Prostate gland (tissue), 2 donors: ENCODE measurements at regions of chr18 and their contacts with region 1.

Region 1: GRCh38 chr18:55589625-55590291 is 1.8 kb upstream of the TCF4 start:
- DNase-seq: peak; percentile 95
- H3K4me3 ChIP-seq: peak overlapping the region; percentile 61 to 64
- H3K27ac ChIP-seq: peak overlapping the region; percentile 83 to 85
- H3K4me1 ChIP-seq: no peaks in the 10 kb centered on the region
- H3K27me3 ChIP-seq: no peaks in the 10 kb centered on the region
- CTCF ChIP-seq: peak in 1 of 4 experiments; percentile 24
- POLR2A ChIP-seq: peak; percentile 30

Region 2: GRCh38 chr18:55234366-55235093 is 355.2 kb before region 1 on chr18:
- intact Hi-C with region 1: loop called (anchors 10 kb)
- DNase-seq: peak; percentile 80
- H3K4me3 ChIP-seq: no peak overlapping the region
- H3K27ac ChIP-seq: no peak overlapping the region
- H3K4me1 ChIP-seq: no peaks in the 10 kb centered on the region
- H3K27me3 ChIP-seq: no peaks in the 10 kb centered on the region
- CTCF ChIP-seq: peak; percentile 23 to 77 (median 70)
- POLR2A ChIP-seq: no peak

Region 3: GRCh38 chr18:55322178-55322735 is 267.5 kb before region 1 on chr18:
- intact Hi-C with region 1: loop called (anchors 5 kb)
- DNase-seq: peak; percentile 71
- H3K4me3 ChIP-seq: peak overlapping the region; percentile 41 to 43
- H3K27ac ChIP-seq: peak overlapping the region; percentile 76 to 85
- H3K4me1 ChIP-seq: no peaks in the 10 kb centered on the region
- H3K27me3 ChIP-seq: no peaks in the 10 kb centered on the region
- CTCF ChIP-seq: no peak
- POLR2A ChIP-seq: peak; percentile 21

Region 4: GRCh38 chr18:55401638-55402191 is 188.0 kb before region 1 on chr18:
- intact Hi-C with region 1: loop called (anchors 5 kb)
- DNase-seq: no peak
- H3K4me3 ChIP-seq: peak overlapping the region in 1 of 2 donors; percentile 9
- H3K27ac ChIP-seq: peak overlapping the region in 1 of 2 donors; percentile 12
- H3K4me1 ChIP-seq: no peaks in the 10 kb centered on the region
- H3K27me3 ChIP-seq: no peaks in the 10 kb centered on the region
- CTCF ChIP-seq: no peak
- POLR2A ChIP-seq: no peak

Region 5: GRCh38 chr18:55694291-55694690 is 104.5 kb after region 1 on chr18:
- intact Hi-C with region 1: no loop called
- DNase-seq: no peak
- H3K4me3 ChIP-seq: no peak overlapping the region
- H3K27ac ChIP-seq: no peak overlapping the region
- H3K4me1 ChIP-seq: no peaks in the 10 kb centered on the region
- H3K27me3 ChIP-seq: no peaks in the 10 kb centered on the region
- CTCF ChIP-seq: no peak
- POLR2A ChIP-seq: no peak